Activated CD8-positive, alpha-beta T cell treated with anti-CD3 and anti-CD28 coated beads, Interleukin-2, amount 10 ng/mL, durations not matched to agents 7 days and 5 days (primary cell): ENCODE measurements at regions of chr4 and their contacts with region 1.

Region 1: DNA sequence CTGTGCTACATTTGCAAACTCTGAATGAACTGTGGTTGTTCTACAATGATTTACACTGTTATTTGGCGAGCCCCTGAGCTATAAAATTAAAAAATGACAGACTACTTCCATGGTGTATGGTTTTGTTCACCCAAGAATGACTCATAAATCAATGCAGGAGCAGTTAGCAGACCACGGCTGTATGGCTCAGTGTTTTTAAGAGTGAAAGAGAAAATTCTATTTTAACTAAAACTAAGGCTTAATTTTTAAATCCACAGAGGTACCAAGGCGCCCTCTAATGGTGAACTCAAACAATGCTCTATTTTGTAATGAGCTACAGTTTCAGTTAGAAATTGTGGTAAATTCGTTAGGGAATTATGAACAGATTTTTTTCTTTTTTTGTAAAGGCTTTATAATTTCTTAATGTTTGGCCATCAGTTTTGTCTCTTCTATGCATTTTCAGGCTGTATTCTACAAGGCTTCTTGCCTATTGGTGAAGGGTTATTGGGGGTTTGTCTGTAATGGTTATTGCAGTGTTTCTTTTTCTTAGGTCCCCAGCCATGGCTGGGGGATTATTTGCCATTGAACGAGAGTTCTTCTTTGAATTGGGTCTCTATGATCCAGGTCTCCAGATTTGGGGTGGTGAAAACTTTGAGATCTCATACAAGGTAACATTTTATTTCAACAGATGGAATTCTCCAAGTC is 32.5 kb downstream of the HMGB2 start:
- DNase-seq: peak; percentile 46
- ATAC-seq: peak; percentile 47
- H3K4me3 Mint-ChIP-seq: no peak overlapping the region
- H3K27ac Mint-ChIP-seq: no peak overlapping the region
- H3K4me1 Mint-ChIP-seq: no peaks in the 10 kb centered on the region
- H3K27me3 Mint-ChIP-seq: no peaks in the 10 kb centered on the region

Region 2: DNA sequence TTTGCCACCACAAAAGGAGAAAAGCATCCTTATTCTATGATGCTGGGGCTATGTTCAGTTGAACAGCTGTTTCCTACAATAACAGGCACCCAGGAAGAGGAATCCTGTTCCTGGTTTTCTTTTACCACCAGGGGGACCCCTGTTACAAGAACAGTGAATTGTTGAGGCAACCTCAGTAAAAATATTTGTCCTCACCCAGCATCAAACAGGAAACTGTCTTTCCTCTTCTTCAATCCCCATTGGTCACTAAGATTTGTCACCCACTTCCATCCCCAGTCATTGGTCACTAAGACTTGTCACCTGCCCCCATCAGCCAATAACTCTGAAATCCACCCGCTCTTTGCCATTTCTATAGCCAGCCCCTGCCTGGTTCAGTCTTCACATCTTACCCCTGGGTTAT is 276.5 kb before region 1 on chr4:
- CTCF ChIA-PET with region 1: interaction called, 29 read pairs
- POLR2A ChIA-PET with region 1: interaction called, 3 read pairs
- DNase-seq: peak; percentile 36
- ATAC-seq: peak; percentile 63
- H3K4me3 Mint-ChIP-seq: no peak overlapping the region
- H3K27ac Mint-ChIP-seq: no peak overlapping the region
- H3K4me1 Mint-ChIP-seq: peaks cover 4% of the 10 kb centered on the region
- H3K27me3 Mint-ChIP-seq: peaks cover 3% of the 10 kb centered on the region

Region 3: DNA sequence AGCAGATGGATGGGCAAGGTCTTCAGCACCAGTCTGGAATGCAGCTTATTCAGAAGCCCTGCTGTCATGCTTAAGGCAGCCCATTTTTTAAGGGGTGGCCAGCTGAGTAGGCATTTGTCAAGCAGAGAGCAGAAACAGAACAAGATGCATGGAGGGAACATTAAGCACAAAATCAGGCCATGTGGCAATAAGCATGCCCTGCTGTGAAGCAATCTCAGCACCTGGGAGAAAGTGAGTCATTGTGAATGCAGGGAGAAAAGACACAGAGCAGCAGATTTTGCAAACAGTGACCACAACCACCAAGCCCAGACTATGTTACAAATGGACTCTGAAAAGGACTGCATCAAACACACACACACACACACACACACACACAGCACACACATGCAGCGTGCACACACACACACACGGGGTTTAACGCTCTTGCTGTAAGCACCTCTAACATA is 227.1 kb before region 1 on chr4:
- CTCF ChIA-PET with region 1: no interaction called
- POLR2A ChIA-PET with region 1: no interaction called
- DNase-seq: no peak
- ATAC-seq: no peak
- H3K4me3 Mint-ChIP-seq: no peak overlapping the region
- H3K27ac Mint-ChIP-seq: no peak overlapping the region
- H3K4me1 Mint-ChIP-seq: no peaks in the 10 kb centered on the region
- H3K27me3 Mint-ChIP-seq: no peaks in the 10 kb centered on the region

Region 4: DNA sequence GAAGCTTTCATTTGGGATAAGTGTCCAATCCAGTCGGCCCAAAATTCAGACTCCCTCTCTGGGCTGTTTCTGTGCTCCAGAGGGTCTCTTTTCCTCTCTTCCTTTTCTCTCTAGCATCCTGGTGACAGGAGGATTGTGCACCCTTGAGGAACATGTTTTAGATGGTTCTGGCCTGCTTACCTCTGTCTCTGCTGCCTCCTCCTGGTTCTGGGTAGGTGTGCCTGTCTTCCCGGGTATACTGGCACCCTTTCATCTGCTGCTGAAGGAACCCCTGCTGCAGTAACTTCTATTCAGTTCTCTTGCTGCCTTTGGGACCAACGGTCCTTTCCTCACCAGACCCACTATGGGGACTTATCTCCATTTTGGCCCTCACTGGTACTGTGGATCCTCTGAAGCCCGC is 20.7 kb before region 1 on chr4:
- CTCF ChIA-PET with region 1: interaction called, 94 read pairs
- POLR2A ChIA-PET with region 1: no interaction called
- DNase-seq: no peak
- ATAC-seq: no peak
- H3K4me3 Mint-ChIP-seq: no peak overlapping the region
- H3K27ac Mint-ChIP-seq: no peak overlapping the region
- H3K4me1 Mint-ChIP-seq: no peaks in the 10 kb centered on the region
- H3K27me3 Mint-ChIP-seq: no peaks in the 10 kb centered on the region

Region 5: GRCh38 chr4:173334085-173334772 is 32.6 kb after region 1 on chr4 and contains the start of gene HMGB2:
- CTCF ChIA-PET with region 1: interaction called, 17 read pairs
- POLR2A ChIA-PET with region 1: interaction called, 6 read pairs
- DNase-seq: peak; percentile 100
- ATAC-seq: peak; percentile 95
- H3K4me3 Mint-ChIP-seq: peak within 1 kb of the TSS; percentile 97
- H3K27ac Mint-ChIP-seq: peak within 1 kb of the TSS; percentile 98
- H3K4me1 Mint-ChIP-seq: peaks cover 38% of the 10 kb centered on the region
- H3K27me3 Mint-ChIP-seq: no peaks in the 10 kb centered on the region
- total RNA-seq, gene HMGB2: 861 to 891 TPM

Region 6: DNA sequence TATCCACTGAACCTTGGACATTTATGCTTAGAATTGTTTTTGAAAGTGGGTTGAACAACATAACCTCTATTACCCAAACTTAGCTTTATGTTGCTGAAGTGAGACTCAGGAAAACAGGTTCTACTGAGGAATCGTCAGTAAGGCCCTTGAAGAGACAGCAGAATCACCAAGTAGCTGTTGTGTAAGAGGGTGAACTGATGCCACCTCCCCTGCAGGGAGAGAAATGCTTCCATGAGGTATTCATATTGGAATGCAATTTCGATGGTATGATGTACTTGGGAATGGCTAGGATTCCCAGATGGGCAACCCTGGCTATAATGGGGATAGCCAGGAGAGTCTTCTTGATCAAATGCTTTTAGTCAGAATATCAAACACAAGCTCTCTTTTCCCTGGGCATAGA is 101.4 kb after region 1 on chr4:
- CTCF ChIA-PET with region 1: interaction called, 13 read pairs
- POLR2A ChIA-PET with region 1: no interaction called
- DNase-seq: no peak
- ATAC-seq: no peak
- H3K4me3 Mint-ChIP-seq: no peak overlapping the region
- H3K27ac Mint-ChIP-seq: no peak overlapping the region
- H3K4me1 Mint-ChIP-seq: peaks cover 9% of the 10 kb centered on the region
- H3K27me3 Mint-ChIP-seq: peaks cover 2% of the 10 kb centered on the region